Cardiac septum (tissue), 1 donor: ENCODE measurements at regions of chr19 and their contacts with region 1.

Region 1: GRCh38 chr19:39846176-39846677 is at the start of gene FBL:
- DNase-seq: peak; percentile 98
- total RNA-seq, gene FBL: 64.8 TPM

Region 2: DNA sequence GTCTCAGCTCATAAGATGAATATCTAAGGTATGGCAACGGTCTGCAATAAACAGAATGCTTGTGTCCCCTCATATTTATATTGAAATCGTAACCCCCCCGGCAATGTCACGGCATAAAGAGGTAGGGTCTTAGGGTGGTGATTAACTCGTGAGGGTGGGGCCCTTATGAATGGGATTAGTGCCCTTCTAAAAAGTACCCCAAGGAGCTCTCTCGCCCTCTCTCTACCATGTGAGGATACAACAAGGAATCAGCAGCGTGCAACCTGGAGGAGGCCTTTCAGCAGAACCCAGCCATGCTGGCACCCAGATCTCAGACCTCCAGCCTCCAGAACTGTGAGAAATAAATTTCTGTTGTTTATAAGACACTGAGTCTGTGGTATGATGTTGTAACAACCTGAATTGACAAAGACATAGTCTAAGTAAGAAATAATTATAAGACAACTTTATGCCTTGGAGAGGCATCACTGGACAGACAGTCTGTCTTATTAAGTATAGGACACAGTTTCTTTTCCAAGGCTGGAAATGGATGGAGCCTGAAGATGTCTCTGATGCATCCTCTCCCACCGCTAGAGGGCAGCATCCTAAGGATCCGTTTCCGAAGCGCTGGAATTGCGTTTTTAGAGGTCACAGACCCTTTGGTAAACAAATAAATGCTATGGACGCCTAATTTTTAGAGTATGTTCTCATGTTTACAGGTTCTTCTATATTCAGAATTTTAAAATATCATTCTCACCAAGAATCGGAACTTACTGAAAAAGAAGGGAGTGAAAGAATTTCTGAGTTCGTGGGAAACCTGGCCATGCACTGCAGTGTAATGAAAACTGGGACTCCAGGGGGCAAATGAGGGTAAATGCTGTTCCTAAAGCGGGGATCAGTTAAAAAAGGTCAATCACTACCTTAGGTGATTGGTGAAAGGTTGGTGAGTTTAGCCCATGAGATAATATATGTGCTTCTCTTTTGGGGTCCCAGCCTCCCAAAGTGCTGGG is 80.8 kb before region 1 on chr19:
- intact Hi-C with region 1: loop called (anchors 5 kb)
- DNase-seq: no peak

Region 3: GRCh38 chr19:39792999-39793546 is 53.2 kb before region 1 on chr19:
- intact Hi-C with region 1: loop called (anchors 1 kb)
- DNase-seq: peak; percentile 78

Region 4: DNA sequence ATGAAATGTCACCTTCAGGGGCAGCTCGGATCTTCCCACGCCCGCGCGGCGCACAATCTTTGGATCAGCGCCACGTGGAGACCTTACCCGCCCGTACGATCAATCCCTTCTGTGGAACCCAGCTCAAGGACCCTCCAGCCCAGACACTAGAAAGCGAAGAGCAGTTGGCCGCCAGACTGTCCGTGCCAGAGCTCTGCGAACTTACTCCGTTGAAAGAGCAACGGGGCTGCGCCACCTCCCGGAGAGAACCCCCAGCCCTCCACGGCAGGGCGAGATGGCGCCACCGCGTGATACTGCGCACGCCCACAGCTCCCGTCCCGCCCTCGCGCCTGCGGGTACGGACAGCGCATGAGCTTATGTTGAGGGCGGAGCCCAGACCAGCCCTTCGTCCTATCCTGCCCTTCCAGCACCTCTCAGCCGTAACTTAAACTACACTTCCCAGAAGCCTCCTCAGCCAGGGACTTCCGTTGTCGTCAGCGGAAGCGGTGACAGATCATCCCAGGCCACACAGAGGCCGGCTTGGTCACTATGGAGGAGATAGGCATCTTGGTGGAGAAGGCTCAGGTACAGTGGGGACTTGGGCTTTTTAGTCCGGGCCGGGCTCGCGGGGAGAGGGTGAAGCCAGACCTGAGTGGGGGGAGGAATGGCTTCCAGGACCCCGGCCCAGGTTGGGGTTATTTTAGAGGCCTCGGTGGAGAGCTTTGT is 124.6 kb after region 1 on chr19 and contains the start of gene PSMC4:
- intact Hi-C with region 1: loop called (anchors 5 kb)
- DNase-seq: peak; percentile 99
- total RNA-seq, gene PSMC4: 70.2 TPM